ENCODE measurements at regions of chr14 and their contacts with region 1.

Region 1: GRCh38 chr14:88492272-88493089 is 62.3 kb downstream of the PTPN21 start:
- DNase-seq: peak in 2 of 3 donors; percentile 56 to 60
- ATAC-seq: peak; percentile 73 to 80
- H3K4me3 ChIP-seq: no peak overlapping the region
- H3K27ac ChIP-seq: peak overlapping the region; percentile 37
- H3K4me1 ChIP-seq: no peaks in the 10 kb centered on the region
- H3K27me3 ChIP-seq: no peaks in the 10 kb centered on the region

Region 2: DNA sequence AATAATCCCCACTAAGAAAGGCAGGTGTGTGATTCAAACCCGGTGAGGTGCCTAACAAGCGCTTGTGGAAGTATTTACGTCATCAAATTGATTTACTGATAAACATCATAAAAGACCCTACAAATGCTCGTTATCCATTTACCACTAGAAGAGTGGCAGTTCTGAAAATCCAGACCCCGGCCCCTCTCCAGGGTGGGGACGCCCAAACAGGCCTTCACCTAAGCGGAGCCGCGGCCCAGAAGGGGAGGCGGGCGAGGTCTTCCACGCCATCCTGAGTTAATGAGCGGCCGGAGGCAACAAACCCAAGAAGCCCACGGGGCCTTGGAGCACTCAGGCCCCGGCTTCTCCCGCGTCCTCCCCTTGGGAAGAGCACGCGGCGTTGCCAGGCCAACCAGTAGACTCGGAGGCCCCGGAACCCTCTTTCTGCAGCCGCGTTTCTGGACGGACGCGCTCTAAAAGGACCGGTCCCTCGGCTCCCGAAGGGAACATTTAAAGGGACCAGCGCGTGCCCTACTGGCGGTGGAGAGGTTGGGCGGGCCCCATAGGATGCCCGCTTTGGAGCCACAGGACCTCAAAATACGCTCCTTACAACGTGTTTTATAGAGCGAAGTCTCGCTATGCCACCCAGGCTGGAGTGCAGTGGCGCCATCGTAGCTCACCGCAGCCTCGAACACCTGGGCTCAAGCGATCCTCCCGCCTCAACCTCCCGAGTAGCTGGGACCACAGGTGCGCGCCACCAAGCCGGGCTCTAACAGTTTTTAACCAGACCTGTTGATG is 58.8 kb after region 1 on chr14:
- intact Hi-C with region 1: loop called in 2 of 4 experiments (anchors 2 to 5 kb)
- DNase-seq: peak; percentile 84 to 91 (median 89)
- ATAC-seq: peak; percentile 84 to 90
- H3K4me3 ChIP-seq: peak overlapping the region; percentile 62
- H3K27ac ChIP-seq: peak overlapping the region; percentile 93
- H3K4me1 ChIP-seq: peaks cover 7% of the 10 kb centered on the region
- H3K27me3 ChIP-seq: no peaks in the 10 kb centered on the region

Region 3: GRCh38 chr14:88562831-88563686 is 70.6 kb after region 1 on chr14 and contains the start of gene ZC3H14:
- intact Hi-C with region 1: loop called in 1 of 4 experiments (anchors 5 kb)
- DNase-seq: peak; percentile 88 to 95 (median 94)
- ATAC-seq: peak; percentile 99
- H3K4me3 ChIP-seq: peak within 1 kb of the TSS; percentile 89
- H3K27ac ChIP-seq: peak within 1 kb of the TSS; percentile 43
- H3K4me1 ChIP-seq: peaks cover 2% of the 10 kb centered on the region
- H3K27me3 ChIP-seq: no peaks in the 10 kb centered on the region
- total RNA-seq, gene ZC3H14: 44.4 to 46.2 (median 45.2) TPM

Measured in right cardiac atrium (tissue), 5 donors.